OCI-LY7 (cell line): ENCODE measurements at regions of chr14 and their contacts with region 1.

Region 1: GRCh38 chr14:30935445-30935844 is 61.1 kb downstream of the COCH start:
- DNase-seq: no peak
- H3K4me3 ChIP-seq: no peak overlapping the region
- H3K27ac ChIP-seq: no peak overlapping the region
- H3K4me1 ChIP-seq: no peaks in the 10 kb centered on the region
- CTCF ChIP-seq: no peak

Region 2: GRCh38 chr14:30894923-30895515 is 40.4 kb before region 1 on chr14:
- CTCF ChIA-PET with region 1: no interaction called
- POLR2A ChIA-PET with region 1: interaction called, 11 read pairs
- intact Hi-C with region 1: no loop called
- DNase-seq: no peak
- H3K4me3 ChIP-seq: no peak overlapping the region
- H3K27ac ChIP-seq: no peak overlapping the region
- H3K4me1 ChIP-seq: no peaks in the 10 kb centered on the region
- CTCF ChIP-seq: no peak